GM12878 (cell line): ENCODE measurements at regions of chr15 and their contacts with region 1.

Region 1: DNA sequence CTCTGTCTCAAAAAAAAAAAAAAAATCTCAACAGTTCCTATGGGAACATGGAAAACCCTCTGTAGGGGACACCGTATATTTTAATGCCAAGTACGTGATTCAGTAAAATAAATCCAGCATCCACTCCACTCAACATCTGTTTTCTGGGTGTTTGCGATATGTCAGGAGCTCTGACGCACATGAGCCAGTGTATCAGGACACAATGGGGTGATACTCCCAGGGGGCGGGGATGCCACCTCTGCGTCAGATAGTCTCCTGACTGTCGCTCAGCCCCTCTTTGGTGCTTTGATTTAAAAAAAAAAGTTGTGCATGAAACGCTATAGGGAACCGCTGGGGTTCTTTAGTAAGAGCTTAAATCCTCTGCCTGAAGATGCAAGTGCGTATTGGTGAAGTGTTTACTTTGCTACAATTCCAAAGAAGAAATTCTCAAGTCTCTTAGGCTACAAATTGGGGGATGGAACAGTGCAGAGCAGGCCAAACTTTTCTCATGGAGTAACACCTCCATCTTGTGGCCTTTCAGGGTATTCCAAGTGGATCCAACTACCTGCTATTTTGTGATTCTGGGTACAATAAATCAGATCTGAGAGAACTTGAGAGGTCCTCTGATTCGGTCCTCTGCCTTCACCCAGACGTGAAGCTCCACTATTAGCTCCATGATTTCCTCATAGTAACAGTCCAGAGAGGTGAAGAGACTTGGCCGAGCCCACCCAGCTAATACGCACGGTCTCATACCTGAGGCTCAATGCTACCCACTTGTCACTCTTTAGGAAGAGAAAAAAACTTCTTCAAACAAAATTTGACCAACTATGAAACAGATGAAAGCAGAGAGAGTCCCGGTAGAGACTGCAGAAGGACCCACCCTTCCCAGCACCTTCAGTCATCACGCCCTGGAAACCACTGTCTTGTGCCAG is 9.3 kb upstream of the NR2E3 start:
- DNase-seq: no peak
- ATAC-seq: peak; percentile 78
- H3K4me3 ChIP-seq: no peak overlapping the region
- H3K27ac ChIP-seq: no peak overlapping the region
- H3K4me1 ChIP-seq: peaks cover 10% of the 10 kb centered on the region
- H3K27me3 ChIP-seq: no peaks in the 10 kb centered on the region
- CTCF ChIP-seq: peak; percentile 65 to 86 (median 72); a peak in 5 of 6 replicates
- EP300 ChIP-seq: no peak
- POLR2A ChIP-seq: no peak
- RAD21 ChIP-seq: peak; percentile 96

Region 2: GRCh38 chr15:71455107-71455506 is 346.0 kb before region 1 on chr15:
- CTCF ChIA-PET with region 1: no interaction called
- POLR2A ChIA-PET with region 1: no interaction called
- RAD21 ChIA-PET with region 1: no interaction called
- SMC1A ChIA-PET with region 1: interaction called, 3 read pairs
- in situ Hi-C with region 1: loop called (anchors 10 kb)
- intact Hi-C with region 1: no loop called
- DNase-seq: no peak
- ATAC-seq: no peak
- H3K4me3 ChIP-seq: no peak overlapping the region
- H3K27ac ChIP-seq: no peak overlapping the region
- H3K4me1 ChIP-seq: no peaks in the 10 kb centered on the region
- H3K27me3 ChIP-seq: peaks cover 0 to 4% of the 10 kb centered on the region in 2 experiments; a peak in 1 of 4 replicates
- CTCF ChIP-seq: no peak
- EP300 ChIP-seq: no peak
- POLR2A ChIP-seq: no peak
- RAD21 ChIP-seq: no peak

Region 3: DNA sequence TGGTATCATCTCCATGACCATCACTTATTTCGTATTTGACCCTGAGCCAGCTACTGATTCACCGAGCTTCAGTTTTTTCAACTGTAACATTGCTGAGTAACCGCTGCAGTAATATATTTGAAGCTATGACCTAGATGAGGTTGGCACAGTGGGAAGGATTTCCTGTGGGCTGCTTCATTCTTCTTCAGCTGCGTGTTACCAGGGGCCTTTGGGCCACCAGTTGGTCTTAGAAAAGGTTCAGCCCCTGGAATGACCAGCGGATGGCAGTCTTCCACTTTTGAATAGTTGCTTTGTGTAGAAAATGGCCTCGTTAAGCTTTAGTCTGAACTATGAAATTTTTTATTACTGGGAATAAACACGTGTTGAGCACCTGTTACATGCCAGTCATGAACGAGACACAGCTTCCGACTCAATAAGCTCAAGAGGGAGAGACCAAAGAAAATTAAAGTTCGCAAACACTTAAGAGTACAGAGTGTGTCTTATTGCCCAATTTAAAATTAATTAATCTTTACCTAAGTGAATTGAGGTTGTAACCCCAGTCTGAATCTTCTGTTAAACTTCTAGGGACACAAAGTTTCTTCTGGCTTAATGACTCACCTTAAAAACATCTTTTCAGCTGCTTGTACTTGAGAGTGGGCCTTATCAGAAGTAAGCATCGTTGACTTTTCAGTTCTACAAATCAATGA is 48.3 kb before region 1 on chr15:
- CTCF ChIA-PET with region 1: interaction called, 18 read pairs
- POLR2A ChIA-PET with region 1: no interaction called
- RAD21 ChIA-PET with region 1: interaction called, 3 read pairs
- SMC1A ChIA-PET with region 1: interaction called, 4 read pairs
- in situ Hi-C with region 1: loop called (anchors 5 kb)
- intact Hi-C with region 1: loop called (anchors 1 kb)
- DNase-seq: no peak
- ATAC-seq: peak; percentile 45; the same call in 2 of the 3 replicates
- H3K4me3 ChIP-seq: no peak overlapping the region
- H3K27ac ChIP-seq: no peak overlapping the region
- H3K4me1 ChIP-seq: no peaks in the 10 kb centered on the region
- H3K27me3 ChIP-seq: no peaks in the 10 kb centered on the region; a peak in 2 of 4 replicates
- CTCF ChIP-seq: peak; percentile 38 to 55 (median 45); a peak in 5 of 6 replicates
- EP300 ChIP-seq: no peak
- POLR2A ChIP-seq: no peak
- RAD21 ChIP-seq: peak; percentile 70

Region 4: GRCh38 chr15:71780115-71780976 is 20.7 kb before region 1 on chr15:
- CTCF ChIA-PET with region 1: interaction called, 19 read pairs
- POLR2A ChIA-PET with region 1: no interaction called
- RAD21 ChIA-PET with region 1: interaction called, 5 read pairs
- SMC1A ChIA-PET with region 1: interaction called, 5 read pairs
- in situ Hi-C with region 1: no loop called
- intact Hi-C with region 1: no loop called
- DNase-seq: peak; percentile 49
- ATAC-seq: peak; percentile 86
- H3K4me3 ChIP-seq: 0 out of 2 replicates have a peak overlapping the region, but pooled peaks have one; percentile 19
- H3K27ac ChIP-seq: peak overlapping the region; percentile 40; the same call in 1 of the 2 replicates
- H3K4me1 ChIP-seq: peaks cover 18% of the 10 kb centered on the region
- H3K27me3 ChIP-seq: no peaks in the 10 kb centered on the region
- CTCF ChIP-seq: peak; percentile 68 to 84 (median 74)
- EP300 ChIP-seq: no peak
- POLR2A ChIP-seq: no peak
- RAD21 ChIP-seq: peak; percentile 47

Region 5: DNA sequence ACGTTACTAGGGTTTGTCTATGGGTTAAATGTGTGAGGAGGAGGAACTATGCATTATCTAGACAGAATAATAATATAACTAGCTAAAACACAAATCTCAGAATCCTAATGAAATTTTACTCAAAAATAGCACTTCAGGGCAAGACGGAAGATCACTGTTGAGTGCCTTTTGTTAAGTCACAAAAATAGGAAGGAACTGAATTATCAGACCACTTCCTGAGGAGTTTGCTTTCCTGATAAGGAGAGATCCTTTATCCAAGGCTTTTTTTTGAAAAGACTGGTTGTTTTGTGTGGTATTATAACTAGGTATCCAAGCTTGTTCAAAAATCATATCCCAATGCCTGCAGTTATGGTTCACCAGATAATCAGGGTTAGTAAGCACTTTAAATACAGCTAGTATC is 43.8 kb after region 1 on chr15:
- CTCF ChIA-PET with region 1: no interaction called
- POLR2A ChIA-PET with region 1: no interaction called
- RAD21 ChIA-PET with region 1: no interaction called
- SMC1A ChIA-PET with region 1: no interaction called
- in situ Hi-C with region 1: no loop called
- intact Hi-C with region 1: no loop called
- DNase-seq: no peak
- ATAC-seq: no peak
- H3K4me3 ChIP-seq: no peak overlapping the region
- H3K27ac ChIP-seq: no peak overlapping the region
- H3K4me1 ChIP-seq: no peaks in the 10 kb centered on the region
- H3K27me3 ChIP-seq: no peaks in the 10 kb centered on the region
- CTCF ChIP-seq: no peak
- EP300 ChIP-seq: no peak
- POLR2A ChIP-seq: no peak
- RAD21 ChIP-seq: no peak